ENCODE measurements at regions of chr15 and their contacts with region 1.

Region 1: DNA sequence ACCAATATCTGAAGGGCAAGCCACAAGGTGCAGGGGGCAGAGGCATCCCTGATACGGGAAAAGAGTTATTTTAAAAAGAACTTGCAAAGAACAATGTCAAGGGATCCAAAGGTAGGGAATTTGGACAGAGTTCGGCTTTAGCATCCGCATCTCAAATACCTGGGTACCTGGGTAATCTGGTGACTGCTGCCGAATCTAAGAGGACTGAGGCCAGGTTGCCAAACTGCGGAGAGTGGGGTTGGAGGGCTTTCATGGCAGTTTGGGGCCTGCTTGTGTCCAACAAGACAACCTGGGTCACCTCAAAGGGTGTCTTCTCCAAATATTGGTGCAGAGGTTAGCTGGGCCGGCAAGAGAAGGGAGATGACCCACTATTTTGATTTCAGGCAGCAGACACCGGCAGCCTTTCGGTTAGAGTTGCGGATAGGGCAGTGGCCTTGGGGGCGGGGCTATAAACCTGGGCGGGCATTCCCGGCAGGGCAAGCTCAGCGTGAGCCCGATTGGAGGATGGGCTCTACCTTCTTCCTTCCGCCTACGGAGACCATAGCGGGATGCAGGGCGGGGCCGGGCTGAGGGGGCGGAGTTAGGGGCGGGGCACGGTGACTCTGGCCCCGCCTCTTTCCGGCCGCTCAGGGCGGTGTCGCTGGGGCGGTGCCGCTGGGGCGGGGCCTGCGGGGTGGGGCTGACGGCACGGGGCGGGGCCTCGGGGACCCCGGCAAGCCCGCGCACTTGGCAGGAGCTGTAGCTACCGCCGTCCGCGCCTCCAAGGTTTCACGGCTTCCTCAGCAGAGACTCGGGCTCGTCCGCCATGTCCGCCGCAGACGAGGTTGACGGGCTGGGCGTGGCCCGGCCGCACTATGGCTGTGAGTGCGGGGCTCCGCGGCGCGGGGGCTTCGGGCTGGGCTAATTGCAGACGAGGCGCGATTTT is at the start of gene IQGAP1:
- DNase-seq: peak; percentile 90 to 98 (median 93)
- ATAC-seq: peak; percentile 85 to 91
- H3K4me3 Mint-ChIP-seq: peak within 1 kb of the TSS; percentile 83 to 96 (median 92)
- H3K27ac Mint-ChIP-seq: peak within 1 kb of the TSS; percentile 82 to 98 (median 96)
- H3K4me1 Mint-ChIP-seq: peaks cover 24 to 51% (median 48%) of the 10 kb centered on the region in 4 donors
- H3K27me3 Mint-ChIP-seq: no peaks in the 10 kb centered on the region
- polyA plus RNA-seq, gene IQGAP1: 73.9 to 126 (median 74.2) TPM

Region 2: DNA sequence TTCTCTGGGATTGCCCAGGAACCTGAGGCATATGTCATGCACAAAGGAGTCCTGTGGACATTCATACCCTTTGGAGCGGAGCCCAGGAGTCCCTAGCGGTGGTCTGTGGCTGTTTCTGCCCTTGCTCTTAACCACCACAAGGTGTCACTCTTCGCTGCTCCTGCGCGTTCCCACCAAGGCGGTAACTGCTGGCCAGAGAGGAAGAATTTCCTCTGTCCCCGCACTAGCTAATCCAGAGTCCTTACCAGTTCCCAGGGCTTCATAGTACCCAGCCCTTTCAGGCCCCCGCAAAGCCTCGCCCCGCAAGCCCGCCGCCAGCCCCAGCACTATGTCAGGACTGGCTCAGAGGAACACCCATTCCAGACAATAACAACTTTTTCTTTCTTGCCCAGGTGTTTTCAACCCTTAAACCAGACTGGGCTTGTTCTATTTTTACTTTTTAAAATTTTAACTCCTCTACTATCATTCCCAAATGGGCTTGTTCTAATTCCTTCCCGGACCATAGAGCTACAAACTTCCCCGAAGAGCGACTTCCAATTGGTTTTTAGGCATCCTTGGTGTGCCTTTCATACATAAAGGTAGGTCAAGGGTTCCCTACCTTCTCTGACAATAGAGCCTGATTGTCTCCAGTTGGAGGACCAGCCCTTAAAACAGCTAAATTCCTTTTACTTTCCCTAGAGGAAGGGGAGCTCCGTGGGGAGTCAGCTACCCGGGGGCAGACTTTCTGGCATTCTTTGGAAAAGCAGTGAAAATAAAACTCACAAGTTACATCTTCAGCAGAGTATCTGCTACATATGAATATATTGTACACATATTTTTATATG is 67.5 kb before region 1 on chr15:
- POLR2A ChIA-PET with region 1: no interaction called
- DNase-seq: peak; percentile 43 to 81 (median 65)
- ATAC-seq: peak; percentile 95 to 100
- H3K4me3 Mint-ChIP-seq: peak overlapping the region in 6 of 10 donors; percentile 11 to 64 (median 42)
- H3K27ac Mint-ChIP-seq: peak overlapping the region in 2 of 10 donors; percentile 2 to 8
- H3K4me1 Mint-ChIP-seq: peaks cover 4 to 11% (median 6%) of the 10 kb centered on the region in 4 donors
- H3K27me3 Mint-ChIP-seq: no peaks in the 10 kb centered on the region

Region 3: GRCh38 chr15:90376789-90377188 is 11.0 kb before region 1 on chr15:
- POLR2A ChIA-PET with region 1: interaction called, 18 read pairs
- DNase-seq: peak; percentile 35 to 83 (median 66)
- ATAC-seq: peak; percentile 98 to 100
- H3K4me3 Mint-ChIP-seq: peak overlapping the region; percentile 9 to 82 (median 68)
- H3K27ac Mint-ChIP-seq: peak overlapping the region; percentile 8 to 72 (median 50)
- H3K4me1 Mint-ChIP-seq: peaks cover 22 to 55% (median 40%) of the 10 kb centered on the region in 4 donors
- H3K27me3 Mint-ChIP-seq: peaks cover 0 to 3% (median 0%) of the 10 kb centered on the region in 5 donors

Region 4: DNA sequence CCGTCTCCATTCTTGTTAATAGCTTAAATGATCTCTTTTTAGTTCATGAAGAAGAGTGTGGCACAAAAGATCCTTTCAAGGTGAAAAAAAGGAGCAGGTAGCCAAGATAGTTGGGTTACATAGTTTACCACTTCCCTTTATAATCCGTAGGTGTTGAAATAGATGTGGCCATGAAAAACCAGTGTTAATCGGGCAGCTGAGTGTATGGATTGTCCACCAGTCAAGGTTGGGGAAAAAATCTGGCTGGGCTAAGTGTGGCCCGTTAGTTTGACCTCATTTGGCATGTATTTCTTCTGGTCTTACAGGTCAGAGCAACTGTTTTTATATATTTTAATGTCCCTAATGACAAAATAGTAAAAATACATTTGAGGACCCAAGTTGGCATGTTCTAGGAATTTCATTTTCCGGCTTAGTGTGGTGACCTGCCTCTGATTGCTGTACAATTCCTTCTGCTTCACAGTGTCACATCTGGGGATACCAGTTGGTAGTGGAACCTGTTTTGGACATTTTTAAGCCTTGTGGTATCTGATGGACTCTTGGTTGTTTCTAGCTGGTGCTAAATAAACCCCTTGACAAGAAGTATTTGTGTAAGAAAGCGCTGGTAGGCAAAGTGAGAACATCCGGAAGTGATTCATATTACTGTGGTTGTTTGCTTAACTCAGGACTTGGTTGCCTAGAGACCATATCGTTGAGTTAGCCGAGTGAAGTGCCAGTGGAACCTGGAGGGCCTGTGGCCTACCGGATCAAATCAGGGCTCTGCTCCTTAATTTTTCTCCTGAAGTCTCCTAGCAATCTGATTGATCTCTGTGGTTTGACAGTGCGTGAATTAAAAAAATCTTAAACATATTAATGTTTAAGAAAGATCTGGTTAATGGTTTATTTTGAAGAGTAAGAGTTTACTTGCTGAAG is 12.9 kb after region 1 on chr15:
- POLR2A ChIA-PET with region 1: interaction called, 40 read pairs
- DNase-seq: peak; percentile 28 to 91 (median 74)
- ATAC-seq: peak; percentile 91 to 99
- H3K4me3 Mint-ChIP-seq: peak overlapping the region; percentile 50 to 85 (median 78)
- H3K27ac Mint-ChIP-seq: peak overlapping the region; percentile 96 to 99 (median 98)
- H3K4me1 Mint-ChIP-seq: peaks cover 16 to 87% (median 61%) of the 10 kb centered on the region in 4 donors
- H3K27me3 Mint-ChIP-seq: no peaks in the 10 kb centered on the region

Measured in naive thymus-derived CD8-positive, alpha-beta T cell (primary cell).